Left cardiac atrium (tissue), 4 donors: ENCODE measurements at regions of chr17 and their contacts with region 1.

Region 1: GRCh38 chr17:27332485-27333409 is 38.8 kb downstream of the WSB1 start:
- DNase-seq: peak; percentile 99
- ATAC-seq: peak; percentile 97

Region 2: GRCh38 chr17:27181935-27182334 is 150.8 kb before region 1 on chr17:
- intact Hi-C with region 1: no loop called
- DNase-seq: no peak
- ATAC-seq: no peak

Region 3: DNA sequence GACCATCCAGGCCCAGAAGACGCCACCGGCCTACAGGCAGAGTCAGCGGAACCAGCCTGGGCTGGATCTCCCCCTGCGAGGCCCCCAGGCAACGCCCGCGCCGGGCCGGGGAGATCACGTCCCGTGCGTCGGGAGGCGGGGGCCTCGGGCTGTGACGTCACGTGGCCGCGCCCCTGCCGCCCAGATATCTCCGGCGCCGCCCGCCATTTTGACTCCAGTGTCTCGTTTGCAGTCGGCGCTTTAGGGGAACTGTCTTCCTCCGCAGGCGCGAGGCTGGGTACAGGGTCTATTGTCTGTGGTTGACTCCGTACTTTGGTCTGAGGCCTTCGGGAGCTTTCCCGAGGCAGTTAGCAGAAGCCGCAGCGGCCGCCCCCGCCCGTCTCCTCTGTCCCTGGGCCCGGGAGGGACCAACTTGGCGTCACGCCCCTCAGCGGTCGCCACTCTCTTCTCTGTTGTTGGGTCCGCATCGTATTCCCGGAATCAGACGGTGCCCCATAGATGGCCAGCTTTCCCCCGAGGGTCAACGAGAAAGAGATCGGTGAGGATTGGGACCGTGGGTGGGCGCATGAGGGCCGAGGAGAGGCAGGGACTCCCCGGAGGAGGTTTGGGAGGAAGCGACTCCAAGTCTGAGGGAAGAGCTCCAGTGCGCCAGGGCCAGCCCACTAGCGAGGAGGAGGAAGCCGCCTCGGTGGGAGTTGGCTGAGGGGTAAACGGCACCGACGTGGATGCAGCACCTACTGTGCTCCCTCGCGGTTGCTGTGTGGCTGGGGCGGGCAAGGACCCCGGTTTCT is 38.7 kb before region 1 on chr17 and contains the start of gene WSB1:
- intact Hi-C with region 1: loop called in 1 of 2 experiments (anchors 2 kb)
- DNase-seq: peak; percentile 95
- ATAC-seq: peak; percentile 96 to 97
- total RNA-seq, gene WSB1: 69.3 to 119 TPM

Region 4: DNA sequence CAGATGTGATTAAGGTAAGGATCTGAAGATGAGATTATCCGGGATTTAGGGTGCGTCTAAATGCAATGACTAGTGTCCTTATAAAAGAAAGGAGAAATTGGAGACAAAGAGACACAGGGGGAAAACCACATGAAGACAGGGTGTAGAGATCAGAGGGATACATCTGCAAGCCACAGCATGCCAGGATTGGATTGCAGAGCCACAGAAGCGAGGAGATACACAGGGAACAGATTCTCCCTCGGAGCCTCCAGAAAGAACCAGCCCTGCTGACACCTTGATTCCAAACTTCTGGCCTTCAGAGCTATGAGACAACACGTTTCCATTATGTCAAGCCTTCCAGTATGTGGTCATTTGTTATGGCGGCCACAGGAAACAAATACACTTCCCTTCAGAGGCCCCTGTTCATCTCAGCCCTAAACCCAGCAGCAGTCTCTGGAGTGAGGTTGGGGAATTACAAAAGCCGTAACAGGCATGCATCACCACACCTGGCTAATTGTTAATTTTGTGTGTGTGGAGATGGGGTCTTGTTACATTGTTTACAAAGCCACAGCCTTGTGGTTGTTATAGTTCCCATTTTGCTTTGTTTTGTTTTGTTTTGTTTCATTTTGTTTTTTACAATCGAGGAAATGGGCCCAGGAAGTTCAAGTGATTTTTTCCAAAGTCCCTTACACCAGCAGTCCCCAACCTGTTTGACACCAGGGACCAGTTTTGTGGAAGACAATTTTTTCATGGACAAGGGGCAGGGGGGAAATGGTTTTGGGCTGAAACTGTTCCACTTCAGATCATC is 612.0 kb after region 1 on chr17:
- intact Hi-C with region 1: no loop called
- DNase-seq: no peak
- ATAC-seq: no peak